HepG2 (cell line): ENCODE measurements at regions of chr3 and their contacts with region 1.

Region 1: DNA sequence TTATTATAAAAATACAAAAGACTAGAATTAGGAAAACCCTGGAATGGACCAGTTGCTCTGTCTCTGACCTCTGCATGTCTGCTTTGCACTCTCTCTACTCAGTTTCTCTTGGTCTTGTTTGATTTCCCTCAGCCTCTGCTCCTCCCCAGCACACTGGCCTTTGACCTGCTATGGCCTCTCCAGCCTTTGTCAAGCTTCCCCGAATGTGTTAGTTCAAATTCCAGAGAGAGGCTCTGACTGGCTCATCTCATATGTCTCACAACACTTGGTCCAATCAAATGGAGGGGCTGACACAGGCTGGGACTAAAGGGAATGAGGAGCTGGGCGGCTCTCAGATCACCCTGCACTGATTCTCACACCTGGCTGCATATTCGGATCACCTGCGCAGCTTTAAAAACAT is 52.4 kb upstream of the CMTM8 start:
- DNase-seq: peak; percentile 94
- ATAC-seq: peak; percentile 100
- H3K4me3 ChIP-seq: peak overlapping the region in 1 of 3 experiments; percentile 31; a peak in 1 of 6 replicates
- H3K27ac ChIP-seq: no peak overlapping the region
- H3K4me1 ChIP-seq: peaks cover 45% of the 10 kb centered on the region
- H3K27me3 ChIP-seq: peaks cover 0 to 2% of the 10 kb centered on the region in 2 experiments; a peak in 2 of 5 replicates
- CTCF ChIP-seq: no peak
- EP300 ChIP-seq: peak in 1 of 2 experiments; percentile 65; a peak in 2 of 4 replicates
- POLR2A ChIP-seq: no peak
- RAD21 ChIP-seq: no peak

Region 2: DNA sequence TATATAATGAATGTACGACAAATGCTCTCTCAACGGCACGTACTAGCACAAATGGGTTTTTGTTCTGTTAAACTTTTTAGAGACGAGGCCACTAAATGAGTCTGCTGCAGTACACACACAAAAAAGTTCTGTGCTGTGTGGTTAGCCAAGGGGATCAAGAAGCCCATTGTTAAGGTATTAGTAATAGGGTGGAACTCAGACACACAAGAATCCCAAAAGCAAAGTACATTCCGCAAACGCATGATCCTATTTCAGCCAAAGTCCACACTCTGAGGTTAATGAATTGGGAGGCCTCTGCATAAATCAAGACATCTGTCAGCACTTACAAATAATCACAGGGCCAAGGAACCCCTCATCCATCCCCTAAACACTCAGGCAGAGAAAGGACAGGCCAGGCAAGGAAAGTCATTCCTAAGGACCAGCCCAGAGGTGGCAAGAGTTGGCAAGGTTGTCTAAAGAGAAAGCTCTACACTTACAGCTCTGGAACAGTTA is 217.1 kb before region 1 on chr3:
- CTCF ChIA-PET with region 1: no interaction called
- POLR2A ChIA-PET with region 1: no interaction called
- in situ Hi-C with region 1: no loop called
- intact Hi-C with region 1: no loop called
- DNase-seq: peak; percentile 96
- ATAC-seq: peak; percentile 89
- H3K4me3 ChIP-seq: peak overlapping the region in 2 of 3 experiments; percentile 46 to 52; a peak in 3 of 6 replicates
- H3K27ac ChIP-seq: peak overlapping the region; percentile 80
- H3K4me1 ChIP-seq: peaks cover 86% of the 10 kb centered on the region
- H3K27me3 ChIP-seq: no peaks in the 10 kb centered on the region
- CTCF ChIP-seq: no peak
- EP300 ChIP-seq: peak; percentile 50 to 92; a peak in 3 of 4 replicates
- POLR2A ChIP-seq: peak in 1 of 2 experiments; percentile 40; a peak in 2 of 4 replicates
- RAD21 ChIP-seq: no peak

Region 3: DNA sequence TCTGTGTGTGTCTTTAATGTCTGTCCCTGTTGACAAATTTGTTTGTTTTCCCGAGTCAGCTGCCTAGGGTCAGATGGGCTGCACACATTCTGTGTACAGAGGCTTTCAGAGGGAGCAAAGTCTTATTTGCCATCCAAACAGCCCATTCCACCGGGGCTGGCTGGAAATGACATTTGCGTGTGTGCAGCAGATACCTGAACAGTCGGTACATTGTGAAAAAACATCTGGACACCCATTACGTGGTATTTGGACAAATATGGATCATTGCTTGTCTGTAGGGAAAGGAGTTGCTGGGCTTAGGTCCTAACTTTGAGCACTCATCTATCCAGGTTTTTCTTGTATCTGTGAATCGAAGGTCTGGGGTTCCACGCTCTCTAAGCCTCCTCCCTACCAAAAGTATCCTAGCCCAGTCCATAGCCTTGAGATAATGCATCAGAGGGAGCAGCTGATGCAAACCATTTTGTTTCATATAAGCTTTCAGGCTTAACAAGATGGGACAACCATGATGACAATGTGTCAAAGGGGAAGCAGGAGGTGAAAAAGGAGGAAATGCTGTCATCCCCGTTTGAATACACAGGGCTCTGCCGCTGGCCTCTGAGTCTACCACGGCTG is 30.2 kb after region 1 on chr3:
- CTCF ChIA-PET with region 1: no interaction called
- POLR2A ChIA-PET with region 1: interaction called, 3 read pairs
- in situ Hi-C with region 1: no loop called
- intact Hi-C with region 1: loop called (anchors 2 kb)
- DNase-seq: peak; percentile 99
- ATAC-seq: peak; percentile 99
- H3K4me3 ChIP-seq: peak overlapping the region; percentile 21 to 47 (median 39); a peak in 5 of 6 replicates
- H3K27ac ChIP-seq: peak overlapping the region; percentile 86
- H3K4me1 ChIP-seq: peaks cover 49% of the 10 kb centered on the region
- H3K27me3 ChIP-seq: no peaks in the 10 kb centered on the region
- CTCF ChIP-seq: peak; percentile 11; the same call in 1 of the 2 replicates
- EP300 ChIP-seq: peak; percentile 92 to 99
- POLR2A ChIP-seq: 0 out of 4 replicates have a peak, but pooled peaks of 1 of the 2 experiments have one; percentile 33
- RAD21 ChIP-seq: peak; percentile 35; the same call in 1 of the 2 replicates